ENCODE measurements at regions of chr20 and their contacts with region 1.

Region 1: GRCh38 chr20:24781422-24781980 is 167.6 kb upstream of the CST7 start:
- DNase-seq: peak; percentile 39
- ATAC-seq: peak; percentile 91
- H3K4me3 ChIP-seq: no peak overlapping the region
- H3K27ac ChIP-seq: no peak overlapping the region
- H3K4me1 ChIP-seq: no peaks in the 10 kb centered on the region
- H3K27me3 ChIP-seq: peaks cover 0 to 3% of the 10 kb centered on the region in 2 experiments; a peak in 2 of 5 replicates
- CTCF ChIP-seq: peak; percentile 74
- EP300 ChIP-seq: no peak
- POLR2A ChIP-seq: no peak
- RAD21 ChIP-seq: peak; percentile 50; the same call in 1 of the 2 replicates

Region 2: GRCh38 chr20:23937303-23938117 is 844.0 kb before region 1 on chr20:
- CTCF ChIA-PET with region 1: no interaction called
- POLR2A ChIA-PET with region 1: no interaction called
- in situ Hi-C with region 1: no loop called
- intact Hi-C with region 1: loop called (anchors 5 kb)
- DNase-seq: peak; percentile 52
- ATAC-seq: peak; percentile 100
- H3K4me3 ChIP-seq: no peak overlapping the region
- H3K27ac ChIP-seq: no peak overlapping the region
- H3K4me1 ChIP-seq: no peaks in the 10 kb centered on the region
- H3K27me3 ChIP-seq: no peaks in the 10 kb centered on the region
- CTCF ChIP-seq: peak; percentile 95
- EP300 ChIP-seq: no peak
- POLR2A ChIP-seq: no peak
- RAD21 ChIP-seq: peak; percentile 95